ENCODE measurements at regions of chr3 and their contacts with region 1.

Region 1: GRCh38 chr3:72447059-72447946 is 400.9 kb downstream of the SHQ1 start:
- DNase-seq: peak; percentile 88 to 98 (median 94)
- ATAC-seq: peak; percentile 95
- H3K4me3 ChIP-seq: peak overlapping the region; percentile 45 to 66
- H3K4me3 Mint-ChIP-seq: peak overlapping the region; percentile 100
- H3K27ac ChIP-seq: no peak overlapping the region
- H3K27ac Mint-ChIP-seq: peak overlapping the region; percentile 73
- H3K4me1 ChIP-seq: peaks cover 29% of the 10 kb centered on the region
- H3K4me1 Mint-ChIP-seq: peaks cover 41% of the 10 kb centered on the region
- H3K27me3 ChIP-seq: no peaks in the 10 kb centered on the region
- H3K27me3 Mint-ChIP-seq: peaks cover 9% of the 10 kb centered on the region
- CTCF ChIP-seq: no peak

Region 2: GRCh38 chr3:71718072-71718471 is 729.2 kb before region 1 on chr3:
- CTCF ChIA-PET with region 1: no interaction called
- POLR2A ChIA-PET with region 1: no interaction called
- intact Hi-C with region 1: loop called in 1 of 2 experiments (anchors 2 kb)
- DNase-seq: peak in 5 of 9 experiments; percentile 35 to 59 (median 56)
- ATAC-seq: peak; percentile 32
- H3K4me3 ChIP-seq: no peak overlapping the region
- H3K4me3 Mint-ChIP-seq: peak overlapping the region; percentile 38
- H3K27ac ChIP-seq: peak overlapping the region in 1 of 2 experiments; percentile 51
- H3K27ac Mint-ChIP-seq: peak overlapping the region; percentile 83
- H3K4me1 ChIP-seq: peaks cover 60% of the 10 kb centered on the region
- H3K4me1 Mint-ChIP-seq: peaks cover 92% of the 10 kb centered on the region
- H3K27me3 ChIP-seq: no peaks in the 10 kb centered on the region
- H3K27me3 Mint-ChIP-seq: no peaks in the 10 kb centered on the region
- CTCF ChIP-seq: no peak

Region 3: DNA sequence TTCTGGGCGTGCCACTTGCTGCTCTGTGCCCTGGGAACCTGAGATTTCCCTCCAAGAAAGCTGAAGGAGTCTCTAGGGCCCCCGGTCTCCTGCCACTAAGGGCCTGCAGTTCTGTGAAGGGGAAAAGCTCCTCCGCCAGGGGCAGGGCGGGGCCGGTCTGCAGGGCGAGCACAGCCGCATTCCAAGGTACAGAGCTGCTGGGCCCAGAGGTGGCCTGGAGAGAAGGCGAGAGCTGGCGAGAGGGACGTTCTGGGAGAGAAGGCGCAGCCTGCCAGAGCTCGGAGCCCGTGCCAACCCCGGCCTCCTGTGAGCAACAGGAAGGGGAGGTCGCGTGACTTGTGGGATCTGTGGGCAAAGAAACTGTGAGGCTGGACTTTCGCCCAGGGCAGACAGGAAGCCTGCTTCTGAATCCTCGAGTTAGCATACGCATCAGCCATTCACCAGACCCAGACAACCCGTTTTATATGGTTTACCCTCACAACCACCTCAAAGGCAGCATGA is 99.4 kb before region 1 on chr3:
- CTCF ChIA-PET with region 1: no interaction called
- POLR2A ChIA-PET with region 1: no interaction called
- intact Hi-C with region 1: loop called in 1 of 2 experiments (anchors 5 kb)
- DNase-seq: peak in 6 of 9 experiments; percentile 35 to 73 (median 61)
- ATAC-seq: no peak
- H3K4me3 ChIP-seq: no peak overlapping the region
- H3K4me3 Mint-ChIP-seq: no peak overlapping the region
- H3K27ac ChIP-seq: peak overlapping the region in 1 of 2 experiments; percentile 26
- H3K27ac Mint-ChIP-seq: no peak overlapping the region
- H3K4me1 ChIP-seq: peaks cover 56% of the 10 kb centered on the region
- H3K4me1 Mint-ChIP-seq: peaks cover 43% of the 10 kb centered on the region
- H3K27me3 ChIP-seq: no peaks in the 10 kb centered on the region
- H3K27me3 Mint-ChIP-seq: peaks cover 5% of the 10 kb centered on the region
- CTCF ChIP-seq: no peak

Region 4: GRCh38 chr3:72482589-72483321 is 35.5 kb after region 1 on chr3:
- CTCF ChIA-PET with region 1: no interaction called
- POLR2A ChIA-PET with region 1: no interaction called
- intact Hi-C with region 1: loop called in 1 of 2 experiments (anchors 2 kb)
- DNase-seq: peak; percentile 24 to 79 (median 55)
- ATAC-seq: peak; percentile 71
- H3K4me3 ChIP-seq: peak overlapping the region; percentile 40 to 47
- H3K4me3 Mint-ChIP-seq: peak overlapping the region; percentile 84
- H3K27ac ChIP-seq: peak overlapping the region in 1 of 2 experiments; percentile 21
- H3K27ac Mint-ChIP-seq: peak overlapping the region; percentile 69
- H3K4me1 ChIP-seq: peaks cover 4% of the 10 kb centered on the region
- H3K4me1 Mint-ChIP-seq: peaks cover 14% of the 10 kb centered on the region
- H3K27me3 ChIP-seq: no peaks in the 10 kb centered on the region
- H3K27me3 Mint-ChIP-seq: no peaks in the 10 kb centered on the region
- CTCF ChIP-seq: no peak

Region 5: DNA sequence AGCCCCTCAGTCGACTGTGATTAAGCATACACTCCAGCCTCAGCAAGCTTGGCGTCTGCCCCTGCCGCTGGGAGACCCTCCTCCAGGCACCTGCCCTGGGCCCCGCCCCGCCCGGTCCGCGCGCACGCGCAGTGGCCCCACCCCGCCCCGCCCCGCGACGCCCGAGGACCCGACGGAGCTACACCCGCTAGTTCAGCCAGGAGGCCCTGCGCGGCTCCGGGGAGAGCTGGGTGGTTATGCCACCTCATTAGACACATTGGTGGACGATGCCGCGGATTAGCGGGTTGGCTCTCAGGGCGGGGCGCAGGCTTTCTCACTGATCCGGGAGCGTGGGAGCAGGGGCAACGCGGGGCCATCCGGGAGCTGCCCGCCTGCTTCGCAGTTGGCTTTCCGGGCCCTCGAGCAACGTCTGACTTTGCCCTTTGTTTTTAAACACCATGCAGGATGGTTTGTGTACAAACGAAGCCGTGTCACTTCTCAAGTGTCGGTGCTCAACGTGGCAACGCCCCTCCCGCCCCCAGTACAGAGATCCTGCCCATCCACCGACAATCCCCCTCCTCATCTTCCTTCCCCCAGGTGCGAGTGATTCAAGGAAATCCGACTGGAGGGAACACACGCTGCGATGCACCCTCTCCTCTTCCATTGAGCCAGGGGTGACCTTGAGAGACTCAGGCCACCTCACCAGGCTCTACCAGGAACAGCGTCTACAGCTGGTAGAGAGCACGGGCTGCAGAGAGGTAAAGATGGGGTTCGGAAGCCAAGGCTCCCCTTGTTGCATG is 291.6 kb after region 1 on chr3:
- CTCF ChIA-PET with region 1: no interaction called
- POLR2A ChIA-PET with region 1: no interaction called
- intact Hi-C with region 1: loop called in 1 of 2 experiments (anchors 5 kb)
- DNase-seq: peak; percentile 50 to 85 (median 73)
- ATAC-seq: peak; percentile 92
- H3K4me3 ChIP-seq: peak overlapping the region; percentile 56 to 67
- H3K4me3 Mint-ChIP-seq: peak overlapping the region; percentile 89
- H3K27ac ChIP-seq: peak overlapping the region; percentile 69 to 73
- H3K27ac Mint-ChIP-seq: peak overlapping the region; percentile 97
- H3K4me1 ChIP-seq: peaks cover 19% of the 10 kb centered on the region
- H3K4me1 Mint-ChIP-seq: peaks cover 31% of the 10 kb centered on the region
- H3K27me3 ChIP-seq: no peaks in the 10 kb centered on the region
- H3K27me3 Mint-ChIP-seq: no peaks in the 10 kb centered on the region
- CTCF ChIP-seq: no peak

Region 6: DNA sequence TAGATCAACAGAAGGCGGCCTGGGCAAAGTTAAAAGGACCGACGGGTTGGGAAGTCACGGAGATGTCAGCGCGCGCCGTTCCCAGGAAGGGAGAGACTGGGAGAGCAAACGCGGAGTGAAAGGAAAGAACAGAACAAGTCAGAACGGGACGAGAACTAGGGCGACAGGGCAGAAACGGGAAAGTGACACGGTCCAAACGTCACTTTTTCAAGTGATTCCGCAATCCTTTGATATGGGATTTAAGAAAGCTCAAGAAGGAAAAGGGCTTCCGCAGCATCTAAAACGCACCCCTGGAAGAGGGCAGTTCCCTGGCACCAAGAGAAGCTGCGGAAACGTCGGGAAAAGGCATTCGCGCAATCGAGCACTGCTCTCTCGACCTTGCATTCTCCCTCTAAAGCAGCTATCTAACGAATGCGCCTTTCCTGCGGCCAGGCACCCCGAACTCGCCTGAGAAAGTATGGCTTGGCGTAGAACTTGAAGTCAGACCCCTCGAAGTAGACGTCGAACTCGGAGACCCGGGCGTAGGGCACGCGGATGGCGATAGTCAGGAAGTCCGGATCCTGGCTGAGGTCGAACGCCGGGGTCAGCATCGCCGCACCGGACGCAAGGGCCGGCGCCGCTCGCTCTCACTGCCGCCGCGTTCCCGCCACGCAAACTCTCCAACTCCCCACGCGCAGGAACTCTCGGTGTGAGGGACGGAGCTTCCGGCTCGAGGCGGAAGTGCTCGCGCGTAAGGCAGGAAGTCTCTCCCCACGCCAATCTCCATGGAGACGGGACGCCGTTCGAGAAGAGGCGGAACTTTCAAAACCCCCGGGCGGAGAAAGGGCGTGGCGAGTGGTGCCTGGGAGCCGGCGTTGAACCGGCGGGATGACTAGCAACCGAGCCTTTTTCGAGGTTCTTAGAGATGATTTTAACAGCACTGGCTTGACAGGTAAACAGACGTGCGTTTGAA is 400.7 kb after region 1 on chr3 and contains the start of gene SHQ1:
- CTCF ChIA-PET with region 1: no interaction called
- POLR2A ChIA-PET with region 1: no interaction called
- intact Hi-C with region 1: loop called (anchors 1 kb)
- DNase-seq: peak; percentile 84 to 98 (median 95)
- ATAC-seq: peak; percentile 90
- H3K4me3 ChIP-seq: peak within 1 kb of the TSS; percentile 64 to 92
- H3K4me3 Mint-ChIP-seq: peak within 1 kb of the TSS; percentile 95
- H3K27ac ChIP-seq: peak within 1 kb of the TSS; percentile 16 to 51
- H3K27ac Mint-ChIP-seq: peak within 1 kb of the TSS; percentile 80
- H3K4me1 ChIP-seq: peaks cover 23% of the 10 kb centered on the region
- H3K4me1 Mint-ChIP-seq: peaks cover 53% of the 10 kb centered on the region
- H3K27me3 ChIP-seq: no peaks in the 10 kb centered on the region
- H3K27me3 Mint-ChIP-seq: no peaks in the 10 kb centered on the region
- CTCF ChIP-seq: no peak
- total RNA-seq, gene SHQ1: 7.1 to 11.3 TPM

Measured in CD8-positive, alpha-beta T cell (primary cell).